Right ventricle myocardium inferior (tissue), 1 donor: ENCODE measurements at regions of chr18 and their contacts with region 1.

Region 1: DNA sequence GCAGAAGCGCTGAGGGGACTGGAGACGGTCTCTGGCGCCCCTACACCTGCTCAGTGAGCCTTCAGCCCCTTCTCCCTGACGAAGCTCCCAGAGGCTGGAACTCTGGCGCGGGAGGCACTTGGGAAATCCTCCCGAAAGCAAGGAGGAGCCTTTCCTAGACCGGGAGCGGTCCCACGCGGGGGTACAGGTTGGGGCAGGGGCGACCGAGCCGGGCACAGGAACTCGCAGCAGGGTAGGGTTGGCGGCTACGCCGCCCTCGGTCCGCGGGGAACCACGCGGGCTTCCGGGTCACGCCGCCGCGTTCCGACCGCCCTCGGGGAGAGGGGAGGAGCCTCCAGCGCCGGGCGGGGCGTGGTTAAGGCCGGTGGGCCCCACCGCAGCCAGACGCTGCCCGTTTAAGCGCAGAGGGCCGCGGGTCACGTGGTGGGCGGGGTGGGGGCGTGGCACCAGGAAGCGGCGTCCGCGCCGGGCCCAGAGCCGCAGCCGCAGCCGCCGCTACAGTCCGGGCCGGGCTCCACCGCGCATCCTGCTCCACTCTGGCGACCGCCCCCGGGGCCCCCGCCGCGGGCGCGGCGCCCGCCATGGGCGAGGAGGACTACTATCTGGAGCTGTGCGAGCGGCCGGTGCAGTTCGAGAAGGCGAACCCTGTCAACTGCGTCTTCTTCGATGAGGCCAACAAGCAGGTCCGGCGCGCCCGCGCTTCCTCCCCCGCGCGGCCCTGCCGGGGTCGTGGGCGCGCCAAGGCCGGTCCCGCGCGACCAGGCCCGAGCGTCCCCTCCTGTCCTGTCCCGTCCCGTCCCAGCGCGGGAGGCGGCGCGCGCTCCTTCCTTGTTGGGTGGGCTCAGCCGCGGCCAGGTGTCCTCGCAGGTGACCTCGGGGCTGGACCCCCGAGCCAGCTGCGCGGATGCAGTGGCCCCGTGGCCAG is at the start of gene RMC1:
- DNase-seq: peak; percentile 99
- ATAC-seq: peak; percentile 98
- total RNA-seq, gene RMC1: 13.0 TPM

Region 2: GRCh38 chr18:22822024-22822423 is 681.3 kb before region 1 on chr18:
- intact Hi-C with region 1: no loop called
- DNase-seq: no peak
- ATAC-seq: no peak

Region 3: GRCh38 chr18:23452728-23453679 is 50.3 kb before region 1 on chr18 and contains the start of gene RIOK3:
- intact Hi-C with region 1: loop called (anchors 5 kb)
- DNase-seq: peak; percentile 100
- ATAC-seq: peak; percentile 99
- total RNA-seq, gene RIOK3: 49.3 TPM

Region 4: GRCh38 chr18:23586249-23587196 is 83.2 kb after region 1 on chr18 and contains the start of gene NPC1:
- intact Hi-C with region 1: loop called (anchors 5 kb)
- DNase-seq: peak; percentile 97
- ATAC-seq: peak; percentile 98
- total RNA-seq, gene NPC1: 10.9 TPM

Region 5: GRCh38 chr18:23812546-23813440 is 309.5 kb after region 1 on chr18:
- intact Hi-C with region 1: loop called (anchors 10 kb)
- DNase-seq: no peak
- ATAC-seq: no peak

Region 6: GRCh38 chr18:23994361-23994902 is 491.1 kb after region 1 on chr18:
- intact Hi-C with region 1: loop called (anchors 10 kb)
- DNase-seq: peak; percentile 65
- ATAC-seq: peak; percentile 40